Dendritic cell treated with granulocyte-macrophage colony-stimulating factor and Interleukin-4, amounts not matched to agents 40 ng/mL and 50 ng/mL, for 4 days (primary cell): ENCODE measurements at regions of chr16 and their contacts with region 1.

Region 1: DNA sequence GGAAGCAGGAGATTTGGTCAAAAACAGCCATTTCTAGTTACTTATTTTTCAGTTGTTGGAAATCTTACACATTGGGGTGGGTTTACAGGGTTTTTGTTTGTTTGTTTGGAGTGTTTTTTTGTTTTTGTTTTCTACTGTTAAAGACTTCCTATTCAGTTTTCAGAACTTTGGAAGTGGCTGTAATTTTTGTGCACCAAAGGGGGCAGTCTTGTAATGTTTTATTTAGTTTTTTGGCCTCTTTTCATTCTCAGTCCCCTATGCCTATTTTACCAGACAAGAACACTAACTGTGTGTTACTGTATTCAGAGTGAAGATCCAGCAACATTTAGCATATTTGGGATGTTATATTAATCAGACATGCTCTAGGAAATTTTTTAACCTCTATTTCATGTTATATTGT is 20.6 kb downstream of the TPPP3 start:
- H3K4me3 Mint-ChIP-seq: no peak overlapping the region
- H3K27ac Mint-ChIP-seq: no peak overlapping the region
- H3K4me1 Mint-ChIP-seq: peaks cover 7% of the 10 kb centered on the region
- H3K27me3 Mint-ChIP-seq: peaks cover 7% of the 10 kb centered on the region

Region 2: GRCh38 chr16:67013233-67013822 is 359.3 kb before region 1 on chr16:
- intact Hi-C with region 1: no loop called
- H3K4me3 Mint-ChIP-seq: peak overlapping the region; percentile 5
- H3K27ac Mint-ChIP-seq: no peak overlapping the region
- H3K4me1 Mint-ChIP-seq: peaks cover 27% of the 10 kb centered on the region
- H3K27me3 Mint-ChIP-seq: peaks cover 46% of the 10 kb centered on the region

Region 3: DNA sequence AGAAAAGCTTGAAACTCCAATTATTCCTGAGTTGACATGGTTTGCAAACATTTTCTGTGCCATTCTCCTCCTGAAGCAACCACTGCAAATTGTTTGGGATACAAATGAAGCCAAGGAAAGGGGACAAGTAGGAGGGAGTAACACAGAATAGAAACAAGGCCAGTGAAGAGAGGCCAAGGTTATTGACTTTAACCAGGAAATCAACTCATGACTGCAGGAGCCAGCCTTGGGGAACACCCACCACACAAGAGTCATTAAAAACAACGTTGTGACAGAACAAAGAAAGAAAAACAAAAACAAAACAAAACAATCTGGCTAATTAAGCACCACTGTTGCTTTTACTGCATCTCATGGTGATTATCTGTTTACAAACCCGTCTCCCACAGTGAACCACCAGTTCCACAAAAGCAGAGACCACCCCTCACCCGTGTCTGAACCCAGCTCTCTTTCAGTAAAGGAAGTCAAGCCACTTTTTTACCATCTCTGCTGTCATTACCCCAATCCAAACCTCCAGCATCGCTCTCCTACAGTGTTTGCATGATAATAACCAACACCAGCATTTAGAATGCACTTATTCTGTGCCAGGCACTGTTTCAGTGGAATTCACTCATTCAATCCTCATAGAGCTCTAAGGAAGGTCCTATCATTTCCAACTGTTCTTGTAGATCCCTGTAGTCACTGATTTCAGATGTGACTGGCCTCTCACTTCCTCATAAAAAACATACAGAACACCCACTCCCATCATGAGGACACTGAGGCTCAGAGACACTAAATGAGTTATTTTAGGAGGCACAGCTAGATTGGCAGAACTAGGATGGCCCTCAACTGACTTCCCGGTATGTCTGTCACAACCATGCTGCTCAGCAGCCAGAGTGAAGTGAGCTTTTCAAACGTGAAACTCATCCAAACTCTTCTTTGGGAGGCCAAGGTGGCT is 41.6 kb after region 1 on chr16:
- intact Hi-C with region 1: loop called (anchors 5 kb)
- H3K4me3 Mint-ChIP-seq: no peak overlapping the region
- H3K27ac Mint-ChIP-seq: peak overlapping the region; percentile 71
- H3K4me1 Mint-ChIP-seq: peaks cover 24% of the 10 kb centered on the region
- H3K27me3 Mint-ChIP-seq: peaks cover 41% of the 10 kb centered on the region